ENCODE measurements at regions of chr17 and their contacts with region 1.

Region 1: GRCh38 chr17:77963441-77963840 is 4.9 kb downstream of the TNRC6C start:
- DNase-seq: peak in 6 of 10 donors; percentile 47 to 85 (median 50)

Region 2: GRCh38 chr17:78013683-78014467 is 50.4 kb after region 1 on chr17:
- intact Hi-C with region 1: loop called (anchors 5 kb)
- DNase-seq: peak in 4 of 10 donors; percentile 28 to 51 (median 38)

Region 3: DNA sequence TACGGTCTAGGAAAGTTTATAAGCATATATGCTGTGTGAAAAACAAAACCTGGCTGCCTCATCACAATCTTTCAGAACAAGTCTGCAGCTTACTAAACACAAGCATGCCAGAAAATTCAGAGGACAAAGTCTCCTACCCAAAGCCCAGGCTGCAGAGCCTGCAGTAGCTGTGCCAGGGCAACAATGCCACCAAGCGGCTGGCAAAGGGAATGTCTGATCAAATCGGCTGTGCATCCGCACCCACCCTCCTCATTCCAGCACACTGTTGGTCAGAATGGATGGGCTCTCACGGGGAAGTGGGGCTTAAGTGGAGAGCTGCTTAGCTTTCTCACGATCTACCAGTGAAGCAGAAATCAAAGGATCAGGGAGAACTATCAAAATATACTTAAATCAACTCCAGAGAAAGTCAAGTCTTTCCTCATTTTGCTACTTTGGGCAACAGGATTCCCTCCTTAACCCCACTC is 745.1 kb after region 1 on chr17:
- intact Hi-C with region 1: no loop called
- DNase-seq: peak; percentile 63 to 98 (median 82)

Measured in posterior cingulate gyrus (tissue), 11 donors.